Cardiac septum (tissue), 1 donor: ENCODE measurements at regions of chr16 and their contacts with region 1.

Region 1: DNA sequence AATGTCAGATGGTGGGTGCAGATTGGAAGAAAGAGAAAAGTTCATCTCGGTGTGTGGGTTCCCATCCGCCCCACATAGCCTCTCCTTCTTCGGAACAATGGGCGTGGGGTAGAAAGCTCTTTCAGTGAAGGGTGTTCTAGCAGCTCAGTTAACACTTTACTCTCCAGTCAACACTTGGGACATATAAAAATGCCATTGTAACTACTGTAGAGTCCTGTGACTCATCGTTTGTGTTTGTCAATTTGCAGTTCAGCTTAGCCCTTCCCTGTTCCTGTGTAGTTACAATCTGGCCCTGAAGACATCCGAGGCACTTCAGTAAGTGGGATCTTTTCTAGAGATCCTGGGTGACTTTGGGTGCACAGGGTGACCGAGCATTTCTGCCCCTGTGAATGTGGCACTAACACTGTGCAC is 11.5 kb upstream of the CLEC18C start:
- DNase-seq: peak; percentile 36

Region 2: GRCh38 chr16:70251629-70252354 is 89.7 kb after region 1 on chr16 and contains the start of gene EXOSC6:
- intact Hi-C with region 1: loop called (anchors 10 kb)
- DNase-seq: peak; percentile 94
- total RNA-seq, gene EXOSC6: 10.6 TPM

Region 3: GRCh38 chr16:70270176-70270575 is 108.1 kb after region 1 on chr16:
- intact Hi-C with region 1: loop called (anchors 10 kb)
- DNase-seq: peak; percentile 46